ENCODE measurements at regions of chr4 and their contacts with region 1.

Region 1: GRCh38 chr4:4269856-4270255 is 20.1 kb downstream of the LYAR start:
- DNase-seq: peak; percentile 69
- H3K4me3 ChIP-seq: no peak overlapping the region
- H3K27ac ChIP-seq: peak overlapping the region; percentile 77
- H3K4me1 ChIP-seq: peaks cover 25% of the 10 kb centered on the region
- H3K27me3 ChIP-seq: no peaks in the 10 kb centered on the region
- CTCF ChIP-seq: no peak
- POLR2A ChIP-seq: no peak

Region 2: DNA sequence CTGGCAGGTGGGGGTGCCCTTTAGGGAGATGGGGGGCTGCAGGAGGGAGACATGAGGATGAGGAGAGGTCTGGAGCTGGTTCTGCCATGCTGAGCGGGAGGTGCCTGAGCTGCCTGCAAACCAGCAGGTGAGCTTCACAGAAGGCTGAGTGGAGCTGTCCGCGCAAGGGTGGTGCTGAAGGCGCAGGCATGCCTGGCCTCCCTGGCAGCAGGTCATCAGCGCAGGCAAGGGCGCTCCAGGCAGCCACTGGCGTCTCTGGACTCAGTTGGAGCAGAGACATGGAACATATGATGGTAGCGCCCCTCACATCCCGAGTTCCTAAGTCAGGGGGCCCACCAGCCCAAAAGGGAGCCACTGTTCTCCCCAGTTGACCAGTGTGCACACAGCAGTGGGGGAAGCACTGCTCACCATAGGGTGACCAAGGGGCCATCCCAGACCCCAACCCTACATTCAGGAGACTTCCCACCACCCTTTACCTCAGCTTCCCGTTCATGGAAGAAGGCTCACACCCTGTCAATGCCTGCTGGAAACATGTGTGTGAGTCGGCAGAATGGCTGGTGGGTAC is 477.8 kb before region 1 on chr4:
- CTCF ChIA-PET with region 1: no interaction called
- POLR2A ChIA-PET with region 1: no interaction called
- dilution Hi-C with region 1: no loop called
- intact Hi-C with region 1: no loop called
- DNase-seq: peak; percentile 16
- H3K4me3 ChIP-seq: no peak overlapping the region
- H3K27ac ChIP-seq: no peak overlapping the region
- H3K4me1 ChIP-seq: no peaks in the 10 kb centered on the region
- H3K27me3 ChIP-seq: no peaks in the 10 kb centered on the region
- CTCF ChIP-seq: no peak
- POLR2A ChIP-seq: no peak

Region 3: DNA sequence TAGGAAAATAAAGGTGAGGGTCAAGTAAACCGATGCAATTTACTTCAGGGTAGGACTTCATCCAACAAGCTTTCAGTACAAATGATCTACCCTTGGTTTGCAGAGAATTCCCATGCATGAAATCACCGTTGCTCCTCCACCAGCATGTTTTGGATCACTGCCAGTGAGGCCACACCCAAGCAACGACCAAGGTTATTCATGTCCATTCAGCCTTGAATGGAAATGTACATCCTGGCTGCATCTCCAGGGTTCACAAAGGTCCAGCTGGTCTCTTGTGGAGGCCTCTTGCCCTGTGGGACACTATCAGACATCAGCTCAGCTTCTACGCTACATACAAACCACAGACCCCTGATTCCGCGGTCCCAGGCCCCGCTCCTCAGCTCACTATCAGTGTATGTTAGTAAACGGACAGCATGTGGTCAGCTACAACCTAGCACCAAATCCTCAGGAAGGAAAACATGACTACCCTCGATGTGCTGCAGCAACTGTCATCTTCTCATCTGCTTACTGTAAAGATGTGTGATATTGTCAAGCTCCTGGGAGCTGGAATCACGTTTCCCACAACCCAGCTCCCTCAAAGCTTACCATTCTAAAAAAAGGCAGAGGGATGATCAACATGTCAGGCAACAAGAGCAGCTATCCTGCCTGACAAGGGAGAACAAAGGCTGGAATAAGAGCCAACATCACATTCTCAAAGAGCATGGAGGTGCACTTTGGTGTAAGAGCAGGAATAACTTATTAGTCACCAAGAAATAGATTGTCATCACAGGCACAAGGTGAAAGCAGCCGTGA is 15.2 kb after region 1 on chr4:
- CTCF ChIA-PET with region 1: interaction called, 4 read pairs
- POLR2A ChIA-PET with region 1: no interaction called
- dilution Hi-C with region 1: no loop called
- intact Hi-C with region 1: loop called (anchors 1 kb)
- DNase-seq: no peak
- H3K4me3 ChIP-seq: no peak overlapping the region
- H3K27ac ChIP-seq: no peak overlapping the region
- H3K4me1 ChIP-seq: peaks cover 10% of the 10 kb centered on the region
- H3K27me3 ChIP-seq: no peaks in the 10 kb centered on the region
- CTCF ChIP-seq: no peak
- POLR2A ChIP-seq: no peak

Region 4: GRCh38 chr4:4289941-4290850 is 20.3 kb after region 1 on chr4 and contains the starts of genes LYAR and ZBTB49:
- CTCF ChIA-PET with region 1: interaction called, 4 read pairs
- POLR2A ChIA-PET with region 1: no interaction called
- dilution Hi-C with region 1: no loop called
- intact Hi-C with region 1: loop called (anchors 1 kb)
- DNase-seq: peak; percentile 94
- H3K4me3 ChIP-seq: peak within 1 kb of the TSS; percentile 81 to 94 (median 89)
- H3K27ac ChIP-seq: peak within 1 kb of the TSS; percentile 41
- H3K4me1 ChIP-seq: peaks cover 17% of the 10 kb centered on the region
- H3K27me3 ChIP-seq: no peaks in the 10 kb centered on the region
- CTCF ChIP-seq: no peak
- POLR2A ChIP-seq: peak; percentile 78
- total RNA-seq, gene LYAR: 24.6 and 27.9 TPM in 2 replicates
- total RNA-seq, gene ZBTB49: 4.6 and 5.8 TPM in 2 replicates

Region 5: GRCh38 chr4:4386736-4387392 is 117.0 kb after region 1 on chr4 and contains the start of gene NSG1:
- CTCF ChIA-PET with region 1: no interaction called
- POLR2A ChIA-PET with region 1: no interaction called
- dilution Hi-C with region 1: no loop called
- intact Hi-C with region 1: no loop called
- DNase-seq: no peak
- H3K4me3 ChIP-seq: peak within 1 kb of the TSS in 1 of 3 experiments; percentile 31
- H3K27ac ChIP-seq: no peak within 1 kb of the TSS
- H3K4me1 ChIP-seq: peaks cover 7% of the 10 kb centered on the region
- H3K27me3 ChIP-seq: peaks cover 40 to 41% of the 10 kb centered on the region in 2 experiments
- CTCF ChIP-seq: no peak
- POLR2A ChIP-seq: no peak
- total RNA-seq, gene NSG1: 1.0 and 2.0 TPM in 2 replicates

Region 6: DNA sequence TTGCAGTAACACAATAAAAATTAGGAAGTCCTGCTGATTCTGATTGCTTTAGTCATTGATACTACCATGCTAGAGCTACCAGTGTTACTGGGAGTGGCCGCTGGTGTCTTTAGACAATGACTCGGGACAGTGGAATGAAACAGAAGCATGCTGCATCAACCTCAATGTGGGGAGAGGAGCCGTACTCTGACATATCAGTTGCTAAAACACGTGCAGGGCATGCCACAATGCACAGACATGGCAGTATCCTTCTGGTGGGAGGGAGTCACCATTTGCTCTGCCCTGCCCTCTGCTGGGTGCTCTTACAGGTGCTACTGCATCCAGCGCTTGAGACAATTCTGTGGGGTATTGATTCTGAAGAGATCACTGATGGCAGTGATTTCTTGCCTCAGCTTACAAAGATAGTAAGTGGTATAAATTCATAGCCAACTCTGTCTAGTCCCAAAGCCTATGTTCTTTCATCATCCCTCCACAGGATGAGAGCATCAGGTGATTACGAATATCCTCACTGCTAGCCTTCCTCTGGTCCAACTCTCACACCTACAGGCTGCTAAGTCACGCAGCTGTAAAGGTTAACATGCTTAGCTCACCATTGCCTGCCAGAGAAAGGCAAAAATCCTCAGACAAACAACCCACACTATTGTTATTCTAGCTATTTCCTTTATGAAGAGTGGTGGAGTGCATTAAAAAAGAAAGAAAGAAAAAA is 160.8 kb after region 1 on chr4:
- CTCF ChIA-PET with region 1: no interaction called
- POLR2A ChIA-PET with region 1: no interaction called
- dilution Hi-C with region 1: no loop called
- intact Hi-C with region 1: no loop called
- DNase-seq: peak; percentile 50
- H3K4me3 ChIP-seq: no peak overlapping the region
- H3K27ac ChIP-seq: no peak overlapping the region
- H3K4me1 ChIP-seq: peaks cover 4% of the 10 kb centered on the region
- H3K27me3 ChIP-seq: no peaks in the 10 kb centered on the region
- CTCF ChIP-seq: peak; percentile 73 to 74
- POLR2A ChIP-seq: no peak

Region 7: GRCh38 chr4:4631150-4631549 is 361.3 kb after region 1 on chr4:
- CTCF ChIA-PET with region 1: no interaction called
- POLR2A ChIA-PET with region 1: no interaction called
- dilution Hi-C with region 1: no loop called
- intact Hi-C with region 1: no loop called
- DNase-seq: no peak
- H3K4me3 ChIP-seq: no peak overlapping the region
- H3K27ac ChIP-seq: no peak overlapping the region
- H3K4me1 ChIP-seq: no peaks in the 10 kb centered on the region
- H3K27me3 ChIP-seq: no peaks in the 10 kb centered on the region
- CTCF ChIP-seq: no peak
- POLR2A ChIP-seq: no peak

Measured in endothelial cell of umbilical vein (primary cell).